ENCODE measurements at regions of chr11 and their contacts with region 1.

Region 1: GRCh38 chr11:104164028-104164520 is at the start of gene PDGFD:
- DNase-seq: peak; percentile 68 to 75
- ATAC-seq: peak; percentile 94
- H3K4me3 ChIP-seq: peak within 1 kb of the TSS; percentile 71
- H3K4me3 Mint-ChIP-seq: peak within 1 kb of the TSS; percentile 98
- H3K27ac ChIP-seq: peak within 1 kb of the TSS; percentile 77
- H3K27ac Mint-ChIP-seq: peak within 1 kb of the TSS; percentile 77 to 86
- H3K4me1 ChIP-seq: peaks cover 12% of the 10 kb centered on the region
- H3K4me1 Mint-ChIP-seq: peaks cover 32 to 55% of the 10 kb centered on the region in 2 donors
- H3K27me3 ChIP-seq: no peaks in the 10 kb centered on the region
- H3K27me3 Mint-ChIP-seq: no peaks in the 10 kb centered on the region
- CTCF ChIP-seq: peak; percentile 50
- total RNA-seq, gene PDGFD: 23.2 to 41.2 (median 33.1) TPM

Region 2: DNA sequence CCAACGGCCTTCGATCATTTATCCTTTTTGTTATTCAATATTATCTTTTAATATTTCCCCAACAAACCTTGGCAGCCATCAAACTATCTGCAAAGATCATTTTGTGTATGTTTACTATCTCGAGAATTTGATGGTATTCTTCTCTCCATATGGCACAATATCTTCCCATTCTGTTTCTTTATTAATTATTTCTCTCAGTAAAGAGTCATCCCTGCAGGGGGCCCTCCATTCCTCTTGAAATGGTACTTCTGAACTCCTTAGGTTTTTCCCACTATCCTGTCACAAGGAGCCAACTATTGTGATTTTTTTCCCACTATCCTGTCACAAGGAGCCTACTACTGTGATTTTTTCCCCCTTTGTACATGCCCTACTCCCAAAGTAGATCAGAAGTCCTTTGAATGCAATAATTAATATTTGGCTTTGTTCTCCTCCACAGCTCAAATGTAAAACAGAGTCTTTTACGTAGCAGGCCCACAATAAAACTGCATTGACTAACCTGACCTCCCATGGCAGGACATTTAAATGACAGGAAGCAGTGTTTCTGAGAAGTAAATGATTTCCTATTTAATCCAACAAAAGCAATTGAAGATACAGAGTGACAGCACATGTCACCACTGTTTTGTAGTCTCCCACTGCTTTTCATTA is 43.5 kb before region 1 on chr11:
- intact Hi-C with region 1: loop called (anchors 5 kb)
- DNase-seq: no peak
- ATAC-seq: peak; percentile 31 to 58 (median 48)
- H3K4me3 ChIP-seq: no peak overlapping the region
- H3K4me3 Mint-ChIP-seq: no peak overlapping the region
- H3K27ac ChIP-seq: no peak overlapping the region
- H3K27ac Mint-ChIP-seq: peak overlapping the region; percentile 19 to 39
- H3K4me1 ChIP-seq: no peaks in the 10 kb centered on the region
- H3K4me1 Mint-ChIP-seq: peaks cover 47 to 53% of the 10 kb centered on the region in 2 donors
- H3K27me3 ChIP-seq: no peaks in the 10 kb centered on the region
- H3K27me3 Mint-ChIP-seq: no peaks in the 10 kb centered on the region
- CTCF ChIP-seq: no peak

Measured in natural killer cell (primary cell).